Activated naive CD4-positive, alpha-beta T cell treated with anti-CD3 and anti-CD28 coated beads, Interleukin-2, amount 10 ng/mL, durations not matched to agents 7 days and 5 days (primary cell): ENCODE measurements at regions of chr4 and their contacts with region 1.

Region 1: GRCh38 chr4:6673660-6674499 is 19.8 kb upstream of the S100P start:
- DNase-seq: peak; percentile 96
- H3K4me3 Mint-ChIP-seq: peak overlapping the region; percentile 93
- H3K27ac Mint-ChIP-seq: peak overlapping the region; percentile 98
- H3K4me1 Mint-ChIP-seq: peaks cover 50% of the 10 kb centered on the region
- H3K27me3 Mint-ChIP-seq: peaks cover 4% of the 10 kb centered on the region

Region 2: DNA sequence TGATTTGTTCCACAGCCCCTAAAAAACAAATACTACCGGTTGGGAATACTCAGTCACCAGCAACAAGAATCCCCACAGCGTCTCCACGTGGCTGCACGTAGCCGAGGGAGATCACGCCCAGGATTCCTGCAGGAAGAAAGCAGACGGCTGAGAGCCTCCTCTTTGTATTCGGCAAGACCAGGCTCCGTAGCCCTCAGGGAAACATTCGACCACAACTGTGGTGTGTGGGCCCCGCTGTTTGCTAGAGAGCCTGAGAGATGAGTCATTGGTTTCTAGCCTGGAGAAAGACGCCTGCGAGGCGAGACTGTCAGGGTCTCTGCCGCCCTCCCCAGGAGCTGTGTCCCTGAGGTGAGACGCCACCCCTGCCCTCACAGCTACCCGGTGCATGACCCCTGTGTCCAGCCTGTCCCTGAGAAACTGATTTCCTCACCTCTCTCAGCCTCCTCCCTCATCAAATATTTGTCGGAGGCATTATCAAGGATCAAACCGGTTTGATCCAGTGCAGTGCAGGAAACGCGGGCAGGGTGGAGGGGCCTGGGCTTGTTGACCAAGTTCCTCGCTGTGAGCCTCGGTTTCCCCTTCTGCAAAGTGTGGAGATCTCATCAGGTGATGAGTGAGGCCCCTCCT is 15.1 kb after region 1 on chr4:
- CTCF ChIA-PET with region 1: interaction called, 47 read pairs
- DNase-seq: peak; percentile 87
- H3K4me3 Mint-ChIP-seq: peak overlapping the region; percentile 82
- H3K27ac Mint-ChIP-seq: peak overlapping the region; percentile 99
- H3K4me1 Mint-ChIP-seq: peaks cover 81% of the 10 kb centered on the region
- H3K27me3 Mint-ChIP-seq: no peaks in the 10 kb centered on the region

Region 3: GRCh38 chr4:6695660-6696630 is 22.1 kb after region 1 on chr4:
- CTCF ChIA-PET with region 1: interaction called, 76 read pairs
- DNase-seq: peak; percentile 80
- H3K4me3 Mint-ChIP-seq: peak overlapping the region; percentile 40
- H3K27ac Mint-ChIP-seq: peak overlapping the region; percentile 94
- H3K4me1 Mint-ChIP-seq: peaks cover 90% of the 10 kb centered on the region
- H3K27me3 Mint-ChIP-seq: no peaks in the 10 kb centered on the region

Region 4: GRCh38 chr4:6701371-6701770 is 27.5 kb after region 1 on chr4:
- CTCF ChIA-PET with region 1: interaction called, 76 read pairs
- DNase-seq: peak; percentile 60
- H3K4me3 Mint-ChIP-seq: no peak overlapping the region
- H3K27ac Mint-ChIP-seq: no peak overlapping the region
- H3K4me1 Mint-ChIP-seq: peaks cover 82% of the 10 kb centered on the region
- H3K27me3 Mint-ChIP-seq: no peaks in the 10 kb centered on the region

Region 5: DNA sequence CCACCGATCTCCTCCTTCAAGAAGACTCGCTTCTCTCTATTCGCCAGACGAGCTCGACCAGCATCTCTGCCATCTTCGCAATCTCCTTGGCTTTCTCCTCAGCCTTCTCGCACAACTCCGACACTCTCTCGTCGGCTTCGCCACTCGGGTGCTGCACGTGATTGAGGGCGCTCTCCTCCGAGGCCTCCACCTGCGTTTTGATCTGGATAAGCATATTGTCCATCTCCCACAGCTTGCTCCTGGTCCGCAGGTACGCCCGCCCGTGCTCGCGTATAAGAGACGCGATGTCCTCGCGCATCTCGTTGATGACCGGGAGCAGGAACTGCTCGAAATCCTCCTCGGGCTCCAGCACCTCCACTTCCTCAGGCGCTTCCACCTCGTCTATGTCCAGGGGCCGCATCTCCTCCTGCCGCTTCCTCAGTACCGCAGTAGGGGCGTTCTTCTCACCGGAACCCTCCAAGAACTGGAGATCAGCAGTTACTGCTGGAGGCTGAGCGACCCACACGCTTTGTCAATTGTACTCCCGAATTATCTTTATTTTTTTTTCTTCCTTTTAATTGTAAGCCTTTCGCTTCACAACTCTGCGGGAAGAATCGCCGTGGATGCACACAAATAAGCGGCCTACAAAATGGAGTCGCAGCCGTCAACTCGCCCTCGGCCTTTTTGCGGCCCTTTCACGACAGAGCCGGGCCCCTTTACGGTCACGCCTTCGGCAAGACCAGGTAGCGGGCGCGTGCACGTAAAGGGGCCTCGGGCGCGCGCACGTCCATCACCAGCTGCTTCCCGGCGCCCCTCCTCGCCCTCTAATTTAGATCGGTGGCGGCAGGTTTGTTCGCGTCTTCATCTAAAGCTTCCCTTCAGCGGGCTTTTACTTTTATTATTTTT is 35.6 kb after region 1 on chr4 and contains the start of gene MRFAP1L1:
- CTCF ChIA-PET with region 1: interaction called, 56 read pairs
- DNase-seq: peak; percentile 98
- H3K4me3 Mint-ChIP-seq: peak within 1 kb of the TSS; percentile 100
- H3K27ac Mint-ChIP-seq: peak within 1 kb of the TSS; percentile 98
- H3K4me1 Mint-ChIP-seq: peaks cover 60% of the 10 kb centered on the region
- H3K27me3 Mint-ChIP-seq: peaks cover 8% of the 10 kb centered on the region

Region 6: GRCh38 chr4:6716018-6716911 is 42.4 kb after region 1 on chr4 and contains the start of gene BLOC1S4:
- CTCF ChIA-PET with region 1: interaction called, 75 read pairs
- DNase-seq: peak; percentile 89
- H3K4me3 Mint-ChIP-seq: peak within 1 kb of the TSS; percentile 89
- H3K27ac Mint-ChIP-seq: peak within 1 kb of the TSS; percentile 96
- H3K4me1 Mint-ChIP-seq: peaks cover 34% of the 10 kb centered on the region
- H3K27me3 Mint-ChIP-seq: peaks cover 15% of the 10 kb centered on the region